A549 (cell line): ENCODE measurements at regions of chr10 and their contacts with region 1.

Region 1: DNA sequence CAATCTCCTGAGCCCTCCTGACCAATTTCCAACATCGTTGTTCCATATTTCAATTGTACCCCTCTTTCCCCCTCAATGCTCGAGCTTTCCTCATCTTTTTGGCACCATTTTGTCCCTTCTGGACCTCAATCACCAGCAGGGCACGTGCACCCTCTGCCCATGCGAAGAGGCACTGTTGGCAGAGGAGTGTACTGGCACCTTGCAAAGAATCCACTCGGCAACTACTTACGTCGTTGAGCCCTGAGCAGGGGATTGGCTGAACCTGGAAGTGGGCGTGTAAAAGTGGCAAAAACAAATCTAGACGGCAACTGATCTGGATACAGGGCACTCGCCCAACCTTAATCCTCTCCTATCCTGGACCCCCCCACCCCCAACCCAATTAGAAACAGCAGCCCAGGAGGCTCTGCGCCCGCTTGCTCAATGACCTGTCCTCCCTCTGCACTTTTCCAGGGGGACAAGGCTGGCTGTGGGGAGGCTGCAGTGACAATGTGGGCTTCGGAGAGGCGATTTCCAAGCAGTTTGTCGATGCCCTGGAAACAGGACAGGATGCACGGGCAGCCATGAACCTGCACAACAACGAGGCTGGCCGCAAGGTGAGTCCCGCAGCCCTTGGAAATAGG is 18.8 kb downstream of the WNT8B start:
- DNase-seq: peak; percentile 89 to 92
- ATAC-seq: peak; percentile 94 to 97
- H3K4me3 ChIP-seq: peak overlapping the region; percentile 44
- H3K27ac ChIP-seq: no peak overlapping the region
- H3K4me1 ChIP-seq: 0 out of 3 replicates have a peak, but pooled peaks cover 3% of the 10 kb centered on the region
- CTCF ChIP-seq: no peak
- EP300 ChIP-seq: no peak
- POLR2A ChIP-seq: no peak
- RAD21 ChIP-seq: no peak

Region 2: GRCh38 chr10:100338434-100339036 is 143.0 kb before region 1 on chr10:
- CTCF ChIA-PET with region 1: interaction called, 35 read pairs
- POLR2A ChIA-PET with region 1: no interaction called
- DNase-seq: peak; percentile 64 to 85
- ATAC-seq: peak; percentile 64 to 79; a peak in 5 of 6 replicates
- H3K4me3 ChIP-seq: no peak overlapping the region
- H3K27ac ChIP-seq: peak overlapping the region; percentile 1 to 82; a peak in 3 of 6 replicates
- H3K4me1 ChIP-seq: peaks cover 34% of the 10 kb centered on the region
- CTCF ChIP-seq: peak; percentile 93
- EP300 ChIP-seq: no peak
- POLR2A ChIP-seq: no peak
- RAD21 ChIP-seq: peak; percentile 97 to 98

Region 3: DNA sequence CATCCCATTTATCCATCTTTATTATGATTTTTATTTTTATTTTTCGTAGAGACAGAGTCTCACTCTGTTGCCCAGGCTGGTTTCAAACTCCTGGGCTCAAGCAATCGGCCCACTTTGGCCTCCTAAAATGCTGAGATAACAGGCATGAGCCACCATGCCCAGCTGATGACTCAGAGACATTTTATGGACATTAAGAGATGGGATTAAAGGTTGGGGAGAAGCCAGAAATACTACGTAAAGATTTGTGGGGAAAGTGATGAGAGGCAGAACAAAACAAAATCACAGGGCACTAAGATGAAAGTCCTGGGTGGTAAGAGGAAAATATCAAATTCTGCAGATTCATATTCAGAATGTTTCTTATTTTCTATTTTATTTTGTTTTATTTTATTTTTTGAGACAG is 11.2 kb before region 1 on chr10:
- CTCF ChIA-PET with region 1: interaction called, 27 read pairs
- POLR2A ChIA-PET with region 1: no interaction called
- DNase-seq: no peak
- ATAC-seq: no peak
- H3K4me3 ChIP-seq: no peak overlapping the region
- H3K27ac ChIP-seq: no peak overlapping the region
- H3K4me1 ChIP-seq: no peaks in the 10 kb centered on the region
- CTCF ChIP-seq: no peak
- EP300 ChIP-seq: no peak
- POLR2A ChIP-seq: no peak
- RAD21 ChIP-seq: no peak

Region 4: DNA sequence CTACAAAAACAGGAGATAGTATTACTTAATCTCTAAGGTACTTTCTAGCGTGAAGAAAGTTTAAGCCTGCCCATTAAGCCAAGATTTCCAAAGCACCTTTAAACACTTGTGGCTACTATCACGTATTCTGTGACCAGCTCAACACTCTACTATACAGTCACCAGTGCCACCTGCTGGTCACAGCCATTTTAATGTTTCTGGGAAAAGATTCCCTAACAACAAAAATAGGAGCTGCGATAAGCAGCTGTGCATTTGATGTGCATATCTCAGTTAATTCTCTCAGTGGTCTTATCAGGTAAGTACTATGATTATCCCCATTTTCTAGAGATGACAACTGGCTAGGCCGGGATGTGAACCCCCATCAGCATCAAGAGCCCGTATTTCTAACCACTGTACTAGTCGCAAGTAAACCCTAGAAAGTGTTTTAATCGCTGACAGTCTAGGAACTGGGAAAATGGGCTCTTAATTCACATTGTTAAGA is 37.2 kb after region 1 on chr10:
- CTCF ChIA-PET with region 1: interaction called, 381 read pairs
- POLR2A ChIA-PET with region 1: no interaction called
- DNase-seq: peak; percentile 57 to 58
- ATAC-seq: peak; percentile 76 to 85
- H3K4me3 ChIP-seq: no peak overlapping the region
- H3K27ac ChIP-seq: no peak overlapping the region
- H3K4me1 ChIP-seq: no peaks in the 10 kb centered on the region
- CTCF ChIP-seq: peak; percentile 84
- EP300 ChIP-seq: no peak
- POLR2A ChIP-seq: no peak
- RAD21 ChIP-seq: peak; percentile 65 to 69

Region 5: GRCh38 chr10:100683545-100684300 is 202.2 kb after region 1 on chr10:
- CTCF ChIA-PET with region 1: no interaction called
- POLR2A ChIA-PET with region 1: no interaction called
- DNase-seq: no peak
- ATAC-seq: no peak
- H3K4me3 ChIP-seq: no peak overlapping the region
- H3K27ac ChIP-seq: no peak overlapping the region
- H3K4me1 ChIP-seq: peaks cover 4% of the 10 kb centered on the region; the same call in 1 of the 3 replicates
- CTCF ChIP-seq: no peak
- EP300 ChIP-seq: no peak
- POLR2A ChIP-seq: no peak
- RAD21 ChIP-seq: no peak